Astrocyte of the cerebellum (primary cell): ENCODE measurements at regions of chr3 and their contacts with region 1.

Region 1: GRCh38 chr3:38127611-38128302 is 9.2 kb downstream of the ACAA1 start:
- DNase-seq: no peak
- H3K4me3 ChIP-seq: no peak overlapping the region
- CTCF ChIP-seq: no peak

Region 2: DNA sequence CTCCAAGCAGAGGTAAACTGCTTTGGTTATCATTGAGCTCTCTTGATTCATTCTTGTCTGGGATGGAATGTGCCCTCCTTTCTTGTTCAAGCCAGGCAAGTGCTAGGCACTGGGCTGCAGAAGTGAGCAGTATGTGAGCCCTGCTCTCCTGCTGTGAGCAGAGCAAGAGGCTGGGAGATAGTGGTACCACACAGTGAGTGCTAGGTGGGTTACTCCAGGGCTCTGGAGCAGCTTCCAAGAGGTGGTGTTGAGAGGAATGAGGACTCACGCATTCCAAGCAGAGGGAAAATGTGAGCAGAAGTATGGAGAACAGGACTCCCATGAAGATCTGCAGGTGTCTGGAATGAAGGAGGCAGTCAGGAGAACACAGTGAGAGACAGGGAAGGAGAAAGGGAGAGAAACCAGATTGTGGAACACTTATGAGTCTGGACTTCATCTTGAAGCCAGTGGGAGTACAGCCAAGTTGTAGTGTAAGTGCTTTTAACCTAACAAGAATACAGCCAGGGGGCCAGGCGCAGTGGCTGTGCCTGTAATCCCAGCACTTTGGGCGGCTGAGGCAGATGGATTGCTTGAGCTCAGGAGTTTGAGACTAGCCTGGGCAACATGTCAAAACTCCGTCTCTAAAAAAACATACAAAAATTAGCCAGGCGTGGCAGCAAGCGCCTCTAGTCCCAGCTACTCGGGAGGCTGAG is 466.0 kb before region 1 on chr3:
- in situ Hi-C with region 1: no loop called
- DNase-seq: no peak
- H3K4me3 ChIP-seq: no peak overlapping the region
- CTCF ChIP-seq: no peak

Region 3: GRCh38 chr3:38084334-38085310 is 43.1 kb before region 1 on chr3:
- in situ Hi-C with region 1: loop called (anchors 5 kb)
- DNase-seq: peak; percentile 16
- H3K4me3 ChIP-seq: no peak overlapping the region
- CTCF ChIP-seq: no peak

Region 4: DNA sequence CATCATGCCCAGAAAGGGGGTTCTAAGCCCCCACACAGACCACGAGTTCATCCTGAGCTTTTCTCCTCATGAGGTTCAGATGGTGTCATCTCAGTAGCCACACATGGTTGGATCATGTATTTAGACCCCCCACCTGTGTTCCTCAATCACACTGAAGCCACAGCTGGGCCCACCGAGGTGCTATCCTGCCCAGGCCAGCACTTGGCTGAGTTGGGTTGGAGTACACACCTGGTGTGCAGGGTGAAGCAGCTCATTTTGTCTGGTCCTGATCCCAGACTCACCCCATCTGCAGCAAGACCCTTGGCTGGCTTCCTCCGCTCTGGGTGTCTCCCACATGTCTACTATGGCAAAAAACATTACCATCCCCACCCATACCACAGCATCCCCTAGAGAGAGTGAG is 32.8 kb before region 1 on chr3:
- in situ Hi-C with region 1: no loop called
- DNase-seq: no peak
- H3K4me3 ChIP-seq: no peak overlapping the region
- CTCF ChIP-seq: no peak

Region 5: GRCh38 chr3:38274864-38275649 is 147.3 kb after region 1 on chr3:
- in situ Hi-C with region 1: no loop called
- DNase-seq: no peak
- H3K4me3 ChIP-seq: no peak overlapping the region
- CTCF ChIP-seq: no peak